ENCODE measurements at regions of chr17 and their contacts with region 1.

Region 1: DNA sequence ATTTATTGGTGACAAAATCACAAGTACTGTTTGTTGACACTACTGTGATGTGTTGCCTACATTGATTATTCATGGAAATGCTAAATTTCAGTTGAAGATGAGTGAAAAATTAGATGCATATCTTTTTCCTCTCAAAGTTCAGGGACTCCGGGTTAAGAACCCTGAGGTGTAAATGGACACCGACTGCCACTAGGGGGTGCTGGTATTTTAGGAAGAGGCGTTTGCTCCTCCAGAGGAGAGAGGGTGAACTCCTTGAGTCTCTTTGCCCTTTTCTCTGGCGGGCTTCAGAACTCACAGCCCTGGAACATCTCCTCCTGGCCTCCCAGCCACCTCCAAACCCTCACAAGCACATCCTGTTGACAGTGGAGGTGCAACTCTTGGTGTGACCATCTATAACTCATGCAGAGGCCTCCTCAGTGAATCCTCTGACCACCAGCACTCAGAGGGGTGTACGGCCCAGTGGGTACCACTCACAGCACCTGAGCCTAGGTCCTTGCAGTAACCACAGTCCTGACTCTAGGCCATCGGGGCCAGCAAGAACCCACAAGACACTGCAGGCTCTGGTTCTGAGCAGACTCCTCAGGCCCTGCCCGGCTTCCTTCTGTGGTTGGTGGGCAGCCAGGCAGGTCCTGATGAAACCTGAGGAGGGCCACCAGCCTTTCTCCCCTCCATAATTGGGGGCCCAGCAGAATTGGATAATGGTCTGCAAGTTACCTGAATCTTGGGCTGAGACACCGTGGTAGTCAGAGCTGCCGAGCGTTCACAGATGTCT is 26.2 kb upstream of the PIK3R5 start:
- DNase-seq: peak; percentile 42 to 53
- H3K4me3 ChIP-seq: no peak overlapping the region
- H3K4me3 Mint-ChIP-seq: no peak overlapping the region
- H3K27ac Mint-ChIP-seq: no peak overlapping the region
- H3K4me1 ChIP-seq: 0 out of 2 replicates have a peak, but pooled peaks cover 5% of the 10 kb centered on the region
- H3K4me1 Mint-ChIP-seq: peaks cover 10% of the 10 kb centered on the region
- H3K27me3 ChIP-seq: no peaks in the 10 kb centered on the region
- H3K27me3 Mint-ChIP-seq: no peaks in the 10 kb centered on the region
- CTCF ChIP-seq: peak; percentile 37 to 38

Region 2: GRCh38 chr17:8846768-8847211 is 144.9 kb before region 1 on chr17:
- CTCF ChIA-PET with region 1: no interaction called
- POLR2A ChIA-PET with region 1: no interaction called
- intact Hi-C with region 1: no loop called
- DNase-seq: peak; percentile 20 to 36
- H3K4me3 ChIP-seq: no peak overlapping the region
- H3K4me3 Mint-ChIP-seq: no peak overlapping the region
- H3K27ac Mint-ChIP-seq: no peak overlapping the region
- H3K4me1 ChIP-seq: no peaks in the 10 kb centered on the region
- H3K4me1 Mint-ChIP-seq: no peaks in the 10 kb centered on the region
- H3K27me3 ChIP-seq: no peaks in the 10 kb centered on the region
- H3K27me3 Mint-ChIP-seq: no peaks in the 10 kb centered on the region
- CTCF ChIP-seq: no peak

Region 3: DNA sequence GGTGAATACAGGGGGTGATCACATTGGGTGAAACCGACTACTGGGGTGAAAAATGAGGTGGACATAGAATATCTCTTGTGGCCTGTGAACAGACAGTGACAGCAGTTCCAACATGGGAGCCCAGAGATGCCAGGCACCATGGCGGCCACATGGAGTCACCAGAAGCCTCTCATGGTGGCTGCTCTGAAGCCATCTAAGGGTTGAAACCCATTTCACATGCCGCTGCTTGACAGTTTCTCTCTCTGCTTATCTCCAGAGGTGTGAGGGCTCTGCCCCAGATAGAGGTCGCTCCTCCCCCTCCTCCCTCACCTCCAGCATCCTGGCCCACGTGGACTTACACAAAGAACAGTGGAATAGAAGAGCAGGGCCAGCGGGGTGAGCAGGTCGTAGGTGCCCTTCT is 86.4 kb before region 1 on chr17:
- CTCF ChIA-PET with region 1: no interaction called
- POLR2A ChIA-PET with region 1: no interaction called
- intact Hi-C with region 1: no loop called
- DNase-seq: no peak
- H3K4me3 ChIP-seq: no peak overlapping the region
- H3K4me3 Mint-ChIP-seq: no peak overlapping the region
- H3K27ac Mint-ChIP-seq: no peak overlapping the region
- H3K4me1 ChIP-seq: no peaks in the 10 kb centered on the region
- H3K4me1 Mint-ChIP-seq: no peaks in the 10 kb centered on the region
- H3K27me3 ChIP-seq: no peaks in the 10 kb centered on the region
- H3K27me3 Mint-ChIP-seq: peaks cover 3% of the 10 kb centered on the region
- CTCF ChIP-seq: no peak

Region 4: GRCh38 chr17:8965394-8966168 is 26.1 kb before region 1 on chr17 and contains the start of gene PIK3R5:
- CTCF ChIA-PET with region 1: no interaction called
- POLR2A ChIA-PET with region 1: no interaction called
- intact Hi-C with region 1: no loop called
- DNase-seq: no peak
- H3K4me3 ChIP-seq: no peak within 1 kb of the TSS
- H3K4me3 Mint-ChIP-seq: no peak within 1 kb of the TSS
- H3K27ac Mint-ChIP-seq: no peak within 1 kb of the TSS
- H3K4me1 ChIP-seq: no peaks in the 10 kb centered on the region
- H3K4me1 Mint-ChIP-seq: no peaks in the 10 kb centered on the region
- H3K27me3 ChIP-seq: no peaks in the 10 kb centered on the region
- H3K27me3 Mint-ChIP-seq: peaks cover 13% of the 10 kb centered on the region
- CTCF ChIP-seq: no peak
- total RNA-seq, gene PIK3R5: not detected in 2 replicates

Region 5: DNA sequence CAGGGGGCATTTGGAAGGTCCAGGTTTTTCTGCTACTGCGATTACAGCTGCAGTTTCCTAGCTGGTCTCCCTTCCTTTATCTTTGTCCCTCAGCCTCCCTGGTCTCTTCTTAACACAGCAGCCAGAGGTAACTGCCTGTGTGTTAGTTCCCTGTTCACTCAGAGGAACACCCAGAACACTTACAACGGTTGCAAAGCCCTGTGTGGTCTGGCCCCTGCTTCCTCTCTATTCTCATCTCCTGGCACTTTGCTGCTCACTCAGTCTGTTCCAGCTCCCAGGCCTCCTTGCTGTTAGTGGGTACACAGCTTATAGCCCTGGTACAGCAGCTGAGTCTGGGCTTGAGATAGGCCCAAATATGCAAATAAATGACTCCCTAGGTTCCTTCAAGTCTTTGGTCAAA is 46.0 kb after region 1 on chr17:
- CTCF ChIA-PET with region 1: no interaction called
- POLR2A ChIA-PET with region 1: no interaction called
- intact Hi-C with region 1: no loop called
- DNase-seq: no peak
- H3K4me3 ChIP-seq: no peak overlapping the region
- H3K4me3 Mint-ChIP-seq: no peak overlapping the region
- H3K27ac Mint-ChIP-seq: no peak overlapping the region
- H3K4me1 ChIP-seq: no peaks in the 10 kb centered on the region
- H3K4me1 Mint-ChIP-seq: peaks cover 15% of the 10 kb centered on the region
- H3K27me3 ChIP-seq: no peaks in the 10 kb centered on the region
- H3K27me3 Mint-ChIP-seq: no peaks in the 10 kb centered on the region
- CTCF ChIP-seq: no peak

Region 6: GRCh38 chr17:9291912-9292560 is 300.3 kb after region 1 on chr17:
- CTCF ChIA-PET with region 1: no interaction called
- POLR2A ChIA-PET with region 1: no interaction called
- intact Hi-C with region 1: loop called (anchors 1 kb)
- DNase-seq: peak in 1 of 2 experiments; percentile 33
- H3K4me3 ChIP-seq: no peak overlapping the region
- H3K4me3 Mint-ChIP-seq: no peak overlapping the region
- H3K27ac Mint-ChIP-seq: no peak overlapping the region
- H3K4me1 ChIP-seq: no peaks in the 10 kb centered on the region
- H3K4me1 Mint-ChIP-seq: no peaks in the 10 kb centered on the region
- H3K27me3 ChIP-seq: no peaks in the 10 kb centered on the region
- H3K27me3 Mint-ChIP-seq: no peaks in the 10 kb centered on the region
- CTCF ChIP-seq: peak; percentile 53 to 60

Region 7: DNA sequence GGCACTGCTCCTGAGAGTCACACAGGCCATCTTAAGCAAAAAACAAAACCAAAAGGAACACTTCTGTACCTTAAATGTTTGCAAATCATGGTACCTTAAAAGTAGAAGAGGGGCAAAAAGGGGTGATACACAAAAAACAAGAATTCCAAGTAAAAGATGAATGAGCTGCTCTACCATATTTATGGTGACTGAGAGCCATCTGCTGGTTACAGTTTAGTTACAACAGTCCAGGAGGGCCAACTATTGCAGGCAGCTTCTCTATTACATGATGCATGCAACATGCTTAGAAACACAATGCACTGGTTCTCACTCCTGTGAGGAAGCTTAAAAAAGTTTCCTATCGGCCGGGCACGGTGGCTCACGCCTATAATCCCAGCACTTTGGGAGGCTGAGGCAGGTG is 530.4 kb after region 1 on chr17:
- CTCF ChIA-PET with region 1: no interaction called
- POLR2A ChIA-PET with region 1: no interaction called
- intact Hi-C with region 1: loop called (anchors 5 kb)
- DNase-seq: peak in 1 of 2 experiments; percentile 14
- H3K4me3 ChIP-seq: no peak overlapping the region
- H3K4me3 Mint-ChIP-seq: no peak overlapping the region
- H3K27ac Mint-ChIP-seq: no peak overlapping the region
- H3K4me1 ChIP-seq: no peaks in the 10 kb centered on the region
- H3K4me1 Mint-ChIP-seq: no peaks in the 10 kb centered on the region
- H3K27me3 ChIP-seq: no peaks in the 10 kb centered on the region
- H3K27me3 Mint-ChIP-seq: no peaks in the 10 kb centered on the region
- CTCF ChIP-seq: peak; percentile 21 to 29

Measured in Caco-2 (cell line).